Posterior vena cava (tissue), 2 donors: ENCODE measurements at regions of chr18 and their contacts with region 1.

Region 1: GRCh38 chr18:6776188-6776587 is 46.7 kb downstream of the ARHGAP28 start:
- DNase-seq: no peak

Region 2: DNA sequence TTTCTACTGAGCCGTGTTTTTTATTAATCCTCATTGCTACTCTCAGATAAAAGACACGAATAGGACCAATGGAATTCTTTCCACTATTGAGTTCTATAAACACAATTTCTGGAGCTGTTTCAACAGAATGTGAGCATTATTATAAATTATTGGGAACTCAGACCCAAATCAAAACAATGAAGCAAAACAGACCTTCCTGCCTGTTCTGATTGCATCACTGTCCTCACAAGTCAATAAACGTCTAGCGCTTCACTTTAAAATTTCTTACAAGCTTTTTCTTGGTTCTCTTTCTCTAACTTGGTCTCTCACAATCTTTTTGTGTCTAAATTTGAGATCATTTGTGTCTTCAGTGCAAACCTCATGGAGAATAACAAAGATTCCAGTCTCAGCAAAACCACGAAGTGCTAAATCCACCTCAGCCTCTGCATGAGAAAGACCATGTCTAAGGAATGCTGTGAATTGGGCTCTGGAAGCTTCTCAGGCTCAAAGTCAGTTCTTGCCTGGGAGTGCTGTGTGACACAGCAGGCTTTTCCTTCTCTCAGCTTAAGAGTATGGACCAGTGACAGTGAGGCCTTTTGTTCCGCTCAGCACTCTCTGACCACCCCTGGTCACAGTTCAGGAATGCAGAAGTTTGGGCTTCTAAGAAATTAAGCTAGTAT is 23.9 kb before region 1 on chr18:
- intact Hi-C with region 1: loop called in 1 of 2 experiments (anchors 1 kb)
- DNase-seq: no peak

Region 3: DNA sequence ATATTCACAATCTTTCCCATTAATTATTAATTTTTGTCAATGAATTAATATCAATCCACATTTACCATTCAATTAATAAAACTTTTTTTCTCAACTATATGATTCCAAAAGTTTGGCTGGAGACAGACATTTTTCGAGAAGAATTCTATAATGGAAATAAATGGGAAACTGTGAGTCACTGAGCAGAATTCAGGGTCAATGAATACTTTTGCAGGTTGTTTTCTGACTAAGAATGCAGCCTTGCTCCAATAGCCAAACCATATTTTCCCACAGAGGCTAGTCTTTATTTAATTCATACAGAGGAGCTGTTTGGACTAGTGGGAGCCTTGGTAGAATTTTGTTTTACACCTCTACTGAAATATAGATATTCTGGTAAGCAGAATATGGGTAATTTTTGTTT is 35.6 kb after region 1 on chr18:
- intact Hi-C with region 1: no loop called
- DNase-seq: no peak

Region 4: GRCh38 chr18:8212893-8213780 is 1436.9 kb after region 1 on chr18:
- intact Hi-C with region 1: no loop called
- DNase-seq: no peak